Psoas muscle (tissue), 8 donors: ENCODE measurements at regions of chr1 and their contacts with region 1.

Region 1: GRCh38 chr1:231799363-231799986 is 172.9 kb downstream of the DISC1 start:
- DNase-seq: peak in 1 of 2 donors; percentile 44
- ATAC-seq: peak; percentile 47 to 86 (median 83)
- H3K4me3 ChIP-seq: no peak overlapping the region
- H3K27ac ChIP-seq: no peak overlapping the region
- H3K4me1 ChIP-seq: no peaks in the 10 kb centered on the region
- H3K27me3 ChIP-seq: no peaks in the 10 kb centered on the region
- CTCF ChIP-seq: no peak

Region 2: GRCh38 chr1:231571904-231572303 is 227.6 kb before region 1 on chr1:
- intact Hi-C with region 1: no loop called
- DNase-seq: no peak
- ATAC-seq: peak; percentile 28 to 45 (median 34)
- H3K4me3 ChIP-seq: no peak overlapping the region
- H3K27ac ChIP-seq: peak overlapping the region; percentile 17
- H3K4me1 ChIP-seq: no peaks in the 10 kb centered on the region
- H3K27me3 ChIP-seq: no peaks in the 10 kb centered on the region
- CTCF ChIP-seq: no peak

Region 3: DNA sequence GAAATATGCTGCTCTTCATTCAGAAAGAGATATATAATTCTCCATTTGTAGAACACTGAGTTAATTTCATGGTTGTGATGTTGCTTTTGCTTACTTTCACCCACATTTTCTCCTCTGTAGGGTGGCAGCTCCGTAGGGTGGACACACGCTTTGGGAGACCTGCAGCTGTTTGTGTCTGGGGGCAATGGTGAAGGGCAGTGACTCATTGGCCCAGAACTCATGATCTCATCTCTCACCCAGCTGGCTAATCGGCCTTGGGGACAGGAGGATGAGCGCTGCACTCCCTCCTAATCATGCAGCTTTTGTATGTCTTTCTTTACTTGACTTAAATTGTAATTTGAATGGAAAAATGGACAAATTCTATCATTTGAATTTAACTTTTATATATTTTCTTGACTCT is 163.3 kb before region 1 on chr1:
- intact Hi-C with region 1: loop called in 1 of 2 experiments (anchors 10 kb)
- DNase-seq: no peak
- ATAC-seq: peak; percentile 54 to 90 (median 66)
- H3K4me3 ChIP-seq: no peak overlapping the region
- H3K27ac ChIP-seq: no peak overlapping the region
- H3K4me1 ChIP-seq: no peaks in the 10 kb centered on the region
- H3K27me3 ChIP-seq: no peaks in the 10 kb centered on the region
- CTCF ChIP-seq: no peak

Region 4: DNA sequence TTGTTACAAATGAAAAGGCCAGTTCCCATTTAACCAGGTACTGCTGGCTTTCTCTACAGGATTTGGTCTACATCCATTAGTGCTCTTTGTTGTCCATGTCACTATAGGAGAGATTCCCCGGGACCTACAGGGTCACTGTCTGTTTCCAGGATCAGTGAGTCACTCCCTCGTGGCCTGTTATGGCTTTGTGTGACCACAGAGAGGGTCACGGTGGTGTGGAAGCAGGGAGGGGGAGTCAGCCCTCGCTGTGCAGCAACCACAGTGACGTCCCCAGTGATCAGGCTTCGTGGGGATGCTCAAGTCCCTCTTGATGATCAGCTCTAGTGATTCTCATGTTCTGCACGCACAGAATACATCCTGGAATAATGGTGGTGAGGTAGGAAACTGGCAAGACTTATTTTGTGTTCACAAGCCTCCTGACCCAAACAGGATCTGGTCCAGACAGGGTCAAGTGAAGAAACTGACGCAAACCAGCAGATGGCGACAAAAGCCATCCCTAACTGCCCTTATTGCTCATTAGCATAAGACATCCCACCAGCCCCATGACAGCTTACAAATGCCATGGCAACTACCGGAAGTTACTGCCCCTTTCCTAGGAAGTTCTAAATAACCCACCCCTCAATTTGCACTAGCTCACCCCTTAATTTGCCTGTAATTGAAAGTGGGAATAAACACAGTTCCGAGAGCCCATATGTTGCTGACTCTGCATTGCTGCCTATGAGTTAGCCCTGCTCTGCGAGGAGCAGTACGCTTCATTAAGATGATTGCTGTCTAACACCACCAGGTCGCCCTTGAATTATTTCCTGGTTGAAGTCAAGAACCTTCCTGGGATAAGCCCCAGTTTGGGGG is 74.4 kb before region 1 on chr1:
- intact Hi-C with region 1: loop called in 1 of 2 experiments (anchors 10 kb)
- DNase-seq: no peak
- ATAC-seq: peak in 2 of 4 donors; percentile 45 to 51
- H3K4me3 ChIP-seq: no peak overlapping the region
- H3K27ac ChIP-seq: no peak overlapping the region
- H3K4me1 ChIP-seq: no peaks in the 10 kb centered on the region
- H3K27me3 ChIP-seq: peaks cover 0 to 2% (median 0%) of the 10 kb centered on the region in 3 donors
- CTCF ChIP-seq: no peak

Region 5: GRCh38 chr1:231763456-231763855 is 36.0 kb before region 1 on chr1:
- intact Hi-C with region 1: no loop called
- DNase-seq: no peak
- ATAC-seq: no peak
- H3K4me3 ChIP-seq: no peak overlapping the region
- H3K27ac ChIP-seq: no peak overlapping the region
- H3K4me1 ChIP-seq: no peaks in the 10 kb centered on the region
- H3K27me3 ChIP-seq: no peaks in the 10 kb centered on the region
- CTCF ChIP-seq: no peak

Region 6: GRCh38 chr1:231971397-231972104 is 172.1 kb after region 1 on chr1:
- intact Hi-C with region 1: no loop called
- DNase-seq: no peak
- ATAC-seq: peak; percentile 27 to 71 (median 62)
- H3K4me3 ChIP-seq: peak overlapping the region; percentile 3
- H3K27ac ChIP-seq: no peak overlapping the region
- H3K4me1 ChIP-seq: no peaks in the 10 kb centered on the region
- H3K27me3 ChIP-seq: no peaks in the 10 kb centered on the region
- CTCF ChIP-seq: no peak